ENCODE measurements at regions of chr11 and their contacts with region 1.

Region 1: DNA sequence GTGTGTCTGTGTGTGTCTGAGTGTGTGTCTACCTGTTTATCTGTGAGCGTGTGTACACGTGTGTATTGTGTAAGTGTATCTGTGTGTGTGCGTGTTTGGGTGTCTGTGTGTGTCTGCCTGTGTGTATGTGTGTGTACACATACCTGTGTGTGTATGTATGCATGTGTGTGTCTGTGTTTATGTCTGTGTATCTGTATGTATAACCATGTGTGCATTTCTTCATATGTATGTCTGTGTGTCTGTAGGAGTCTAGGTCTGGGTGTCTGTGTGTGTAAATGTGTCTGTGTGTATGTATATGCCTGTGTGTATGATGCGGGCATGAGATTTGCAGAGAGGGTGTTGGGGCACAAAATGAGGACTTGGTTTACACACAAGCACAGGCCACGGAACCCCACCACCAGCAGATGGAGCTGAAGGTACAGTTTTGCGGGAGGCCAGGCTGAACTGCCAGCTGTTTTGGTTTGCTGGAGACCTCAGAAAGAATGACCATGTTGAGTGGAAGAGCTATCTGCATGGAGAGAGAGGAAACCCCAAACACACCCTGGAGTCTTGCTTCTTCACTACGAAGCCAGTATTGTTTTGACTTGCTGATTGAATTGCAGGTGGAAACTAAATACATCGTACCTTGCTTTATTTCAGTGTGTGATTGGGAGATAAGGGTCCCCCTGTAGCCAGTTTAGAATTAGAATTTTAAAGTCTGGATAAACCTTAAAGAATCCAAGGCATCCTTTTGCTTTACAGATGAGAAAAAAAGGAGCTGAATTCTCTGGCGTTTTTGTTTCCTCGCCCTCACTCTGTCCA is 497.2 kb downstream of the NTM start:
- DNase-seq: no peak
- H3K4me3 ChIP-seq: no peak overlapping the region
- H3K27ac ChIP-seq: no peak overlapping the region
- H3K4me1 ChIP-seq: peaks cover 0 to 14% (median 0%) of the 10 kb centered on the region in 4 donors
- H3K27me3 ChIP-seq: no peaks in the 10 kb centered on the region
- CTCF ChIP-seq: peak; percentile 72 to 77 (median 72)
- EP300 ChIP-seq: no peak
- POLR2A ChIP-seq: no peak

Region 2: DNA sequence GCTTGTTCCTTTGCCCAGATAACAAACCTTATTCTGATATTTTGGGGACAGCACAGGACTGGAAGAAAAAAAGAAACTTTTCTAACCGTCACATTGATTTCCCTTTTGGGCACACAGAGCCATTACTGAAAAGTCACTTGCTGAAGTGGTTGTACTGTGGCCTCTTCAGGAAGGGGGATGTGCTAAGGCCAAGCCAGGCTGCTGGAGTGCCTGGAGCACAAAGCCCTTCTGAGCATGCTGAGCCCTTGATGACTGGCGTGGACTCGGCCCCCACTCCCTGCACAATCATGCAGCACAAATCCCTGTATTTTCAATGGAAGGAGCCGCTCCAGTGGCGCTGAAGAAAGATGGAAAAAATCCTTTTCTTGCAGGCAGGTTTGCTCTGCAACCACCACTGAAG is 333.0 kb before region 1 on chr11:
- intact Hi-C with region 1: no loop called
- DNase-seq: no peak
- H3K4me3 ChIP-seq: no peak overlapping the region
- H3K27ac ChIP-seq: no peak overlapping the region
- H3K4me1 ChIP-seq: no peaks in the 10 kb centered on the region
- H3K27me3 ChIP-seq: peaks cover 0 to 18% (median 0%) of the 10 kb centered on the region in 4 donors
- CTCF ChIP-seq: no peak
- EP300 ChIP-seq: no peak
- POLR2A ChIP-seq: no peak

Region 3: DNA sequence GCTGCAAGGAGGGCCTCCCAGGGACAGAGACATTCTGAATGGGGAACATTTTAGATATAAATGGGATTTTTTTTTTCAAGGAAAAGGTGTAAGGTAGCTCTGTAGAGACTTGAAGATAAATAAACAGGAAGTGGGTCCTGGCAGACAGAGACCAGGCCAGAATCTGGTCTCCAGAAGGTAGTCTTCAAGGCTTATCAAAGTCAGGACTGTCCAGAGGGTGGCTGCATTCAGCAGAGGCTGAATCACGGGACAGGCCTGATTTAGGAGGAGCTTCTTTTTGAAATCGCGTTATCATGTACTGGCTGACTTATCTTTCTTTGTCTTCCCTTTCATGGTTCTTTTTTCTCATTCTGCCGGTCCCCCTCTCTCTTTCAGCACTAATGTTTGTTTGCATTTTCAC is 45.6 kb after region 1 on chr11:
- intact Hi-C with region 1: loop called (anchors 2 kb)
- DNase-seq: no peak
- H3K4me3 ChIP-seq: no peak overlapping the region
- H3K27ac ChIP-seq: no peak overlapping the region
- H3K4me1 ChIP-seq: peaks cover 0 to 41% (median 27%) of the 10 kb centered on the region in 4 donors
- H3K27me3 ChIP-seq: peaks cover 0 to 25% (median 0%) of the 10 kb centered on the region in 4 donors
- CTCF ChIP-seq: no peak
- EP300 ChIP-seq: no peak
- POLR2A ChIP-seq: no peak

Region 4: DNA sequence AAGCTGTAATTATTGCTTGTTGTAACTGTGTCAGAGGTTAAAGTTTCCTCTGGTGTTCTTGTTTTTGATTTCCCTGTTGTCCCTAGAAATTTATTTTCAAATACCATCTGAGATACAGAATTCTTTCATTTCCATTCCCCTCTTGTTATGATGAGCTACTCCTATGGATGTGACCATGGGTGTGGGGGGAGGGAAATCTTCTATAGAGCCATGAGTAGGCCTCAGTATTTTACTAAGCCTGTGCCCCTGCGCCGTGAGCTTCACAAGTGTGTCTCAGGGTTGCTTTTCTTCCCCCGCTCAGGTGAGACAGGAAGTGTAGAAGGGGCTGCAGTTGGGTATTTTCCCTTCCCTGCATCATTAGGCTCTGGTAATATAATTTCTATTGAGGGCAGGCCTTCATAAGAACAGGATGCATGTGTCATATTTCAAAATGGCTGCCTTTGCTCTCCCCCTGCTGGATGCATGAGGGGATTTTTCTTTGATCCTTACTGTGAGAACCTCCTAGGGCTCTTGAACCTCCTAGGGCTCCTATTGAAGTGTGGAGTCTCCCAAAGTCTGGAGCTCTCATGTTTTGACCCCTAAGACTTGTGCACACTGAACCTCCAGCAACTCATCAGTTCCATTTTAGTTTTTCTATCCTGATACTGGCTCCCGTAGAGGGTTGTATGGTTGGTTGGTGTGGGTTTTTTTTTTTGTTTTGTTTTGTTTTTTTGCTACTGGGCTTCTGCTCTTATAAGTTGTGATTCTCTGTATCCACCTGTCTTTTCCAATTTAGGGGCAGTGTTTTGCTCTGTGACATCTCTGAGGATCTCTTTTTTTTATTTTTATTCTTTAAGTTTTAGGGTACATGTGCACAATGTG is 161.0 kb after region 1 on chr11:
- intact Hi-C with region 1: loop called (anchors 1 kb)
- DNase-seq: peak; percentile 17
- H3K4me3 ChIP-seq: no peak overlapping the region
- H3K27ac ChIP-seq: no peak overlapping the region
- H3K4me1 ChIP-seq: peaks cover 0 to 16% (median 1%) of the 10 kb centered on the region in 4 donors
- H3K27me3 ChIP-seq: no peaks in the 10 kb centered on the region
- CTCF ChIP-seq: peak; percentile 40 to 76 (median 47)
- EP300 ChIP-seq: no peak
- POLR2A ChIP-seq: no peak

Region 5: GRCh38 chr11:132126973-132127899 is 259.6 kb after region 1 on chr11:
- intact Hi-C with region 1: loop called (anchors 5 kb)
- DNase-seq: no peak
- H3K4me3 ChIP-seq: peak overlapping the region; percentile 41 to 57 (median 52)
- H3K27ac ChIP-seq: peak overlapping the region; percentile 35 to 51 (median 50)
- H3K4me1 ChIP-seq: peaks cover 18 to 24% (median 21%) of the 10 kb centered on the region in 4 donors
- H3K27me3 ChIP-seq: no peaks in the 10 kb centered on the region
- CTCF ChIP-seq: peak; percentile 57 to 64 (median 58)
- EP300 ChIP-seq: no peak
- POLR2A ChIP-seq: no peak

Measured in esophagus muscularis mucosa (tissue), 4 donors.